ENCODE measurements at regions of chr20 and their contacts with region 1.

Region 1: GRCh38 chr20:48620519-48621254 is 207.1 kb downstream of the PREX1 start:
- DNase-seq: peak; percentile 87
- CTCF ChIP-seq: peak; percentile 90

Region 2: GRCh38 chr20:47677635-47678453 is 942.8 kb before region 1 on chr20:
- CTCF ChIA-PET with region 1: interaction called, 92 read pairs
- POLR2A ChIA-PET with region 1: no interaction called
- DNase-seq: peak; percentile 85
- CTCF ChIP-seq: peak; percentile 91

Region 3: DNA sequence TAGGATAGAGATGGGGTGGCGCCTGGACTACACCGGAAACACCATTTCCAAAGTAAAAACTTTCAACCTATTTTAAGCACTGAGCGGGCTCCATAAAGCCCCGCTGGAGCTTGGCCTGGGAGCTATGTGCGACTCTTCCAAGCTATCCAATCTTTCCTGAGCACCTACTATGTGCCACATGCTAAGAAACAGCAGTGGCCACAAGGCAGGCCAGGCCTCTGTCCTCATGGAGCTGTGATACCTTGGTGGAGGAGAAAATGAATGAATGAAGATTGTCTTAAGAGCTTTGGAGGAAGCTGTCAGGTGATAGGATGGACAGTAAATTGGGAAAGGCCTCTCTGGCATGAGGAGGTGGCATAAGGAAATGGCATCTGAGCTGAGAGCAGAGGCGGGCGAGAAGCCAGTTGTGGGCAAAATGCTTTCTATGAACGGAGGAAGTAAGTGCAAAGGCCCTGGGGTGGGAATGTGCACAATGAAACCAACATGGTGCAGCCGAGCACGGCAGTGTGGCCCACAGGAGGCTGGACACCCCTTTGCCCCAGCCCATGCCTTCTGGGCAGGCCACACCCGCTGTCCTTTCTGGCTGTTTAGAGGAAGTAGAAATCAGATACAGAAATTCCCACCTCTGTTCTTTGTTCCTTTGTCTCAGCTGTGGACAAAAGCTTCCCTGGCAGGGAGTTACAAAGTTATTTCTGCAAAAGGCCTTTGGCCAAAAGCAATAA is 847.5 kb before region 1 on chr20:
- CTCF ChIA-PET with region 1: interaction called, 20 read pairs
- POLR2A ChIA-PET with region 1: no interaction called
- DNase-seq: no peak
- CTCF ChIP-seq: no peak

Region 4: GRCh38 chr20:47970325-47971097 is 650.2 kb before region 1 on chr20:
- CTCF ChIA-PET with region 1: interaction called, 10 read pairs
- POLR2A ChIA-PET with region 1: no interaction called
- DNase-seq: no peak
- CTCF ChIP-seq: no peak

Region 5: GRCh38 chr20:48364688-48365421 is 255.8 kb before region 1 on chr20:
- CTCF ChIA-PET with region 1: interaction called, 10 read pairs
- POLR2A ChIA-PET with region 1: no interaction called
- DNase-seq: peak; percentile 51
- CTCF ChIP-seq: no peak

Region 6: DNA sequence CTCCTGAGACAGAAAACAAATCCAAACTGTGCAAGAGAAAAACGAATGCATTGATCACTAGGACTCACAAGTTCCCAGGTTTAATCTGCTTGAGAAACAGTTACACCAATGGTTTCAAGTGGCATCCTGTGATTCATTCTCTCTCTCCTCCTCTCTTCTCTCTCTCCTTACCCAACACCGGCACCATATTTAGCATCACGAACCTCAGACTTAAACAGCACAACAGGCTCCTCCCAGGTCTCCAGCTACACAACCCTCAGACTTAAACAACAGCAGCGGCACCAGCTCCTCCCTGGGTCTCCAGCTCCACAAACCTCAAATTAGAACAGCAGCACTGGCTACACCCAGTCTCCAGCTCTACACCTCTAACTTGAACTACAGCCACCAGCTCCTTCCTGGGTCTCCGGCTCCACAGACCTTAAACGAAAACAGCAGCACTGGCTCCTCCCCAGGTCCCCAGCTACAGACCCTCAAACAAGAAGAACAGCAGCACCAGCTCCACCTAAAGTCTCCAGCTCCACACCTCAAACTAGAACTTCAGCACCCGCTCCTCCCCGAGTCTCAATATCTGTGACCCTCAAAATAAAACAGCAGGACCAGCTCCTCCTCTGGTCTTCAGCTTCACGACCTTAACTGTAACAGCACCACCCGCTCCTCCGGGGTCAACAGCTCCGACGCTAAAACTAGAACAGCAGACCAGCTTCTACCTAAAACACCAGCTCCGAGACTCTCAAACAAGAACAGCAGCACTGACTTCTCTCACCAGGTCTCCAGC is 148.7 kb before region 1 on chr20:
- CTCF ChIA-PET with region 1: interaction called, 13 read pairs
- POLR2A ChIA-PET with region 1: no interaction called
- DNase-seq: no peak
- CTCF ChIP-seq: no peak

Region 7: GRCh38 chr20:48609491-48609978 is 11.2 kb before region 1 on chr20:
- CTCF ChIA-PET with region 1: interaction called, 51 read pairs
- POLR2A ChIA-PET with region 1: no interaction called
- DNase-seq: peak; percentile 78
- CTCF ChIP-seq: no peak